ENCODE measurements at regions of chr19 and their contacts with region 1.

Region 1: GRCh38 chr19:7903244-7904073 is at the start of gene MAP2K7:
- DNase-seq: peak; percentile 100
- ATAC-seq: peak; percentile 96
- H3K4me3 ChIP-seq: peak within 1 kb of the TSS; percentile 5 to 69
- H3K27ac ChIP-seq: peak within 1 kb of the TSS in 1 of 2 donors; percentile 23
- H3K4me1 ChIP-seq: no peaks in the 10 kb centered on the region
- H3K27me3 ChIP-seq: no peaks in the 10 kb centered on the region
- total RNA-seq, gene MAP2K7: 26.6 to 34.3 TPM

Region 2: DNA sequence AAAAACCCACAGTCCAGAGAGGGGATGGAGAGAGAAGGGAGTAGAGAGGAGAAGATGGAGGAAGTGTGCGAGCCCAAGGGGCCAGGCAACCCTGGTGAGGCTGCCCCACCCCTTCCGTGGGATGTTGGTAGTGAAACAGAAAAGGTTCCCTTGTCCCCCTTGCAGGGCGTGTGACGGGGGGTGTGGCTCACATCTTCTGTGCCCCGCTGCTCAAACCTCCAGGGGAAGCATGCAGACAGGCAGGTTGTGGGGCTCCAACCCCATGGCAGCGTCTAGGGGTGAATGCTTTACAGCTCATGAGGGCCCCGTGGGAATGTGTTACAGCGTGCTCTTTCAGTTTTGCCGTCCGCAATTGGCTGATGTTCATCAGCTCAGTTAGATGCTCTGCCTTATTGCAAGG is 88.1 kb before region 1 on chr19:
- intact Hi-C with region 1: no loop called
- DNase-seq: no peak
- ATAC-seq: no peak
- H3K4me3 ChIP-seq: no peak overlapping the region
- H3K27ac ChIP-seq: no peak overlapping the region
- H3K4me1 ChIP-seq: no peaks in the 10 kb centered on the region
- H3K27me3 ChIP-seq: peaks cover 0 to 2% of the 10 kb centered on the region in 2 donors

Region 3: DNA sequence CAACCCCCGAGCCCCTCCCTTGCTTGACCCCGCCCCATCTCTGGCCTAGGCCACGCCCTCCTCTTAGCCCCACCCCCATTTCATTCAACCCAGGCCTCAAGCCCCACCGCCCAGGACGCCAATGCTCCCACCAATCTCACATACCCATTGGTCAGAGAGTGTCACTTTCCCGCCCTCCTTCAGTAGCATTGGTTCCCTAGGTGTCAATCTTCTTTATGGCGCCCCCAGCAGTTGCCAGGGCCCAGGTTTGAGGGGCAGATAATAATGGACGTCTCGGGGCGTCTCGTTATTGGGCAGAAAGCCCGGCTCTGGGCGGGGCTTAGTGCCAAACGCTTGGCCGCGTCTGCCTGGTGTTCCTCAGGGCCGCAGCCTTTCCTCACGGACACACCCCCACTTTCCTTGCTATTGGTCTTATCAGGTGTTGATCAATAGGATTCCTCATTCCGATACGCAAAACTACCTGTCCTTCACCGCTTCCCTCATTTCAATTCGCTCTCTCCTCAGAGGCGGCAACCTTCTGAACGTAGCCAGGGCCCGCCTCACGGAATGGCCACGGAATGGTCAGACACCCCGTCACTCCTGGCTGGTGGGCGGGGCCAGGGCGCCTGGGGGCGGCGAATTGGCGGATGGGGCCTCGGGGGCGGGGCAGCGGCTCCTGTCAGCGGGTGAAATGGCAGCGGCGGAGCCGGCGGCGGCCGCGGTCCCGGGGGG is 73.7 kb before region 1 on chr19 and contains the start of gene EVI5L:
- intact Hi-C with region 1: loop called in 1 of 2 experiments (anchors 1 kb)
- DNase-seq: peak; percentile 99
- ATAC-seq: peak; percentile 98
- H3K4me3 ChIP-seq: peak within 1 kb of the TSS; percentile 70 to 83
- H3K27ac ChIP-seq: no peak within 1 kb of the TSS
- H3K4me1 ChIP-seq: no peaks in the 10 kb centered on the region
- H3K27me3 ChIP-seq: no peaks in the 10 kb centered on the region
- total RNA-seq, gene EVI5L: 13.0 to 13.4 TPM

Region 4: GRCh38 chr19:7888145-7888825 is 15.2 kb before region 1 on chr19 and contains the start of gene LRRC8E:
- intact Hi-C with region 1: no loop called
- DNase-seq: no peak
- ATAC-seq: peak; percentile 41
- H3K4me3 ChIP-seq: no peak within 1 kb of the TSS
- H3K27ac ChIP-seq: no peak within 1 kb of the TSS
- H3K4me1 ChIP-seq: no peaks in the 10 kb centered on the region
- H3K27me3 ChIP-seq: no peaks in the 10 kb centered on the region
- total RNA-seq, gene LRRC8E: 0.60 TPM in 1 of 2 donors, not detected in the other

Region 5: GRCh38 chr19:7919610-7920518 is 16.4 kb after region 1 on chr19 and contains the start of gene SNAPC2:
- intact Hi-C with region 1: loop called in 1 of 2 experiments (anchors 1 kb)
- DNase-seq: peak; percentile 98 to 99
- ATAC-seq: peak; percentile 88
- H3K4me3 ChIP-seq: peak within 1 kb of the TSS; percentile 43 to 59
- H3K27ac ChIP-seq: peak within 1 kb of the TSS in 1 of 2 donors; percentile 72
- H3K4me1 ChIP-seq: no peaks in the 10 kb centered on the region
- H3K27me3 ChIP-seq: no peaks in the 10 kb centered on the region
- total RNA-seq, gene SNAPC2: 20.0 to 26.6 TPM

Region 6: GRCh38 chr19:8050274-8051096 is 147.0 kb after region 1 on chr19:
- intact Hi-C with region 1: no loop called
- DNase-seq: peak; percentile 91 to 94
- ATAC-seq: peak; percentile 70
- H3K4me3 ChIP-seq: no peak overlapping the region
- H3K27ac ChIP-seq: no peak overlapping the region
- H3K4me1 ChIP-seq: no peaks in the 10 kb centered on the region
- H3K27me3 ChIP-seq: no peaks in the 10 kb centered on the region

Measured in aorta (tissue), 5 donors.